ENCODE measurements at regions of chr9 and their contacts with region 1.

Region 1: GRCh38 chr9:2014696-2015580 is at the start of gene SMARCA2:
- DNase-seq: peak; percentile 98
- H3K4me3 Mint-ChIP-seq: peak within 1 kb of the TSS; percentile 99
- H3K27ac Mint-ChIP-seq: peak within 1 kb of the TSS; percentile 100
- H3K4me1 Mint-ChIP-seq: peaks cover 47% of the 10 kb centered on the region
- H3K27me3 Mint-ChIP-seq: peaks cover 4% of the 10 kb centered on the region
- total RNA-seq, gene SMARCA2: 95.1 to 100 TPM

Region 2: GRCh38 chr9:1939926-1940368 is 75.0 kb before region 1 on chr9:
- CTCF ChIA-PET with region 1: no interaction called
- POLR2A ChIA-PET with region 1: no interaction called
- intact Hi-C with region 1: no loop called
- DNase-seq: peak; percentile 52
- H3K4me3 Mint-ChIP-seq: no peak overlapping the region
- H3K27ac Mint-ChIP-seq: no peak overlapping the region
- H3K4me1 Mint-ChIP-seq: peaks cover 3% of the 10 kb centered on the region
- H3K27me3 Mint-ChIP-seq: peaks cover 9% of the 10 kb centered on the region

Region 3: GRCh38 chr9:2066312-2067273 is 51.7 kb after region 1 on chr9:
- CTCF ChIA-PET with region 1: no interaction called
- POLR2A ChIA-PET with region 1: interaction called, 6 read pairs
- intact Hi-C with region 1: loop called (anchors 2 kb)
- DNase-seq: no peak
- H3K4me3 Mint-ChIP-seq: no peak overlapping the region
- H3K27ac Mint-ChIP-seq: peak overlapping the region; percentile 51
- H3K4me1 Mint-ChIP-seq: peaks cover 24% of the 10 kb centered on the region
- H3K27me3 Mint-ChIP-seq: no peaks in the 10 kb centered on the region